CD4-positive, alpha-beta memory T cell (primary cell): ENCODE measurements at regions of chr6 and their contacts with region 1.

Region 1: GRCh38 chr6:144095331-144096002 is at the start of gene SF3B5:
- DNase-seq: peak; percentile 96 to 100 (median 98)
- H3K4me3 ChIP-seq: peak within 1 kb of the TSS; percentile 88 to 95
- H3K4me3 Mint-ChIP-seq: peak within 1 kb of the TSS; percentile 94 to 99 (median 98)
- H3K27ac ChIP-seq: peak within 1 kb of the TSS; percentile 91
- H3K27ac Mint-ChIP-seq: peak within 1 kb of the TSS; percentile 96 to 100 (median 99)
- H3K4me1 ChIP-seq: peaks cover 17% of the 10 kb centered on the region
- H3K4me1 Mint-ChIP-seq: peaks cover 15 to 35% (median 24%) of the 10 kb centered on the region in 4 donors
- H3K27me3 ChIP-seq: no peaks in the 10 kb centered on the region
- H3K27me3 Mint-ChIP-seq: no peaks in the 10 kb centered on the region
- total RNA-seq, gene SF3B5: 87.2 to 91.7 TPM

Region 2: GRCh38 chr6:143015300-143015706 is 1080.2 kb before region 1 on chr6:
- CTCF ChIA-PET with region 1: no interaction called
- POLR2A ChIA-PET with region 1: no interaction called
- intact Hi-C with region 1: no loop called
- DNase-seq: no peak
- H3K4me3 ChIP-seq: no peak overlapping the region
- H3K4me3 Mint-ChIP-seq: no peak overlapping the region
- H3K27ac ChIP-seq: no peak overlapping the region
- H3K27ac Mint-ChIP-seq: peak overlapping the region in 1 of 7 donors; percentile 62
- H3K4me1 ChIP-seq: no peaks in the 10 kb centered on the region
- H3K4me1 Mint-ChIP-seq: no peaks in the 10 kb centered on the region
- H3K27me3 ChIP-seq: no peaks in the 10 kb centered on the region
- H3K27me3 Mint-ChIP-seq: peaks cover 1 to 4% of the 10 kb centered on the region in 2 donors

Region 3: DNA sequence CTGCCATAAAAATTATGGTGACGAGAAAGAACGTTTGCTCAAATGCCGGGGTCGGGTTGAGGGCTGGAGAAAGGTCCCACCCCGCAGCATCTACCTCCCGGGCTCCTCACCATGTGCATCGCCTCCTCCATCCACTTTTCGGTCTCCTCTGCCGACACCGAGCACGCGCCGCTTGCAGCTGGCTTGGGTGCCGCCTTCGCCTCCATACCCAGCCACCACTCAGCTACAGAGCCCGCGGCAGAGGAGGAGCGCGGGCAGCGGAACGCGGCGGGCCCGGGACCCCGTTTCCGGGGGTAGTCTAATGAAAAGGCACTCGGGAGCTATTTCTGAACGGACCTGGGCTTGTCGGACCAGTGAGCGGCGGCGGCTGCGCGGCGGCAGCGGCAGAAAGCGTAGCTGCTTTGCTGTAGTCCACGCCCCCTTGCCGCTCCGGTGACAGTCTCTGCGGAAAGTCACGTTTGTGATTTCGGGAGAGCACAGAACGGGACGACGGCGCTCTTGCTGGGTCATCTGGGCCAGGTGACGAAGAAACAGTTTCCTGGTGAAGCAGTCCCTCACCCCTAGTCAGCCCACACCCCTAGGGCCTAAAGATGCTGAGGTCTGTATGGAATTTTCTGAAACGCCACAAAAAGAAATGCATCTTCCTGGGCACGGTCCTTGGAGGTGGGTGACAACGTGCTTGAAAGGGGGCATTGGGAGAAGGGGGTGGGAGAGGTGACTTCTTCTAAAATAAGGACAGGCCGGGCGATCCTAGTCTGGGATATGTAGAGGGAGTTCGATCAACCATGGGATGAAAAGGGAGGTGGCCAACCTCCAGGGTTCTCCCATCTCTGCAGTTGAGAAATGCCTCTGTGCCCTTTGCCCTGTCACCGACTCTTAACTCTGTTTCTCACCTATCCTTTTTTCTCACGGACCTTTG is 644.8 kb before region 1 on chr6 and contains the starts of genes ADAT2 and PEX3:
- CTCF ChIA-PET with region 1: no interaction called
- POLR2A ChIA-PET with region 1: interaction called, 4 read pairs
- intact Hi-C with region 1: loop called (anchors 1 kb)
- DNase-seq: peak; percentile 94 to 95 (median 94)
- H3K4me3 ChIP-seq: peak within 1 kb of the TSS; percentile 95 to 99
- H3K4me3 Mint-ChIP-seq: peak within 1 kb of the TSS; percentile 94 to 100 (median 98)
- H3K27ac ChIP-seq: peak within 1 kb of the TSS; percentile 67
- H3K27ac Mint-ChIP-seq: peak within 1 kb of the TSS; percentile 86 to 99 (median 97)
- H3K4me1 ChIP-seq: peaks cover 28% of the 10 kb centered on the region
- H3K4me1 Mint-ChIP-seq: peaks cover 25 to 49% (median 36%) of the 10 kb centered on the region in 4 donors
- H3K27me3 ChIP-seq: no peaks in the 10 kb centered on the region
- H3K27me3 Mint-ChIP-seq: no peaks in the 10 kb centered on the region
- total RNA-seq, gene ADAT2: 10.5 to 11.2 TPM
- total RNA-seq, gene PEX3: 20.8 to 23.5 TPM

Region 4: GRCh38 chr6:143842902-143843676 is 252.4 kb before region 1 on chr6 and contains the start of gene LTV1:
- CTCF ChIA-PET with region 1: no interaction called
- POLR2A ChIA-PET with region 1: interaction called, 8 read pairs
- intact Hi-C with region 1: loop called (anchors 10 kb)
- DNase-seq: peak; percentile 89 to 92 (median 90)
- H3K4me3 ChIP-seq: peak within 1 kb of the TSS; percentile 54 to 90
- H3K4me3 Mint-ChIP-seq: peak within 1 kb of the TSS; percentile 93 to 97 (median 95)
- H3K27ac ChIP-seq: peak within 1 kb of the TSS; percentile 92
- H3K27ac Mint-ChIP-seq: peak within 1 kb of the TSS; percentile 96 to 99 (median 98)
- H3K4me1 ChIP-seq: peaks cover 15% of the 10 kb centered on the region
- H3K4me1 Mint-ChIP-seq: peaks cover 19 to 32% (median 25%) of the 10 kb centered on the region in 4 donors
- H3K27me3 ChIP-seq: no peaks in the 10 kb centered on the region
- H3K27me3 Mint-ChIP-seq: no peaks in the 10 kb centered on the region
- total RNA-seq, gene LTV1: 19.9 to 20.8 TPM

Region 5: GRCh38 chr6:144055121-144055931 is 40.1 kb before region 1 on chr6:
- CTCF ChIA-PET with region 1: interaction called, 3 read pairs
- POLR2A ChIA-PET with region 1: interaction called, 41 read pairs
- intact Hi-C with region 1: loop called (anchors 2 kb)
- DNase-seq: peak; percentile 61 to 77 (median 72)
- H3K4me3 ChIP-seq: peak overlapping the region in 1 of 2 donors; percentile 46
- H3K4me3 Mint-ChIP-seq: peak overlapping the region; percentile 77 to 95 (median 89)
- H3K27ac ChIP-seq: peak overlapping the region; percentile 54
- H3K27ac Mint-ChIP-seq: peak overlapping the region; percentile 79 to 98 (median 96)
- H3K4me1 ChIP-seq: peaks cover 33% of the 10 kb centered on the region
- H3K4me1 Mint-ChIP-seq: peaks cover 28 to 39% (median 33%) of the 10 kb centered on the region in 4 donors
- H3K27me3 ChIP-seq: no peaks in the 10 kb centered on the region
- H3K27me3 Mint-ChIP-seq: no peaks in the 10 kb centered on the region

Region 6: GRCh38 chr6:144149891-144150709 is 54.6 kb after region 1 on chr6 and contains the start of gene STX11:
- CTCF ChIA-PET with region 1: no interaction called
- POLR2A ChIA-PET with region 1: interaction called, 14 read pairs
- intact Hi-C with region 1: loop called (anchors 1 kb)
- DNase-seq: peak; percentile 64 to 78 (median 68)
- H3K4me3 ChIP-seq: peak within 1 kb of the TSS; percentile 63 to 84
- H3K4me3 Mint-ChIP-seq: peak within 1 kb of the TSS; percentile 95 to 97 (median 96)
- H3K27ac ChIP-seq: peak within 1 kb of the TSS; percentile 80
- H3K27ac Mint-ChIP-seq: peak within 1 kb of the TSS; percentile 85 to 98 (median 96)
- H3K4me1 ChIP-seq: peaks cover 29% of the 10 kb centered on the region
- H3K4me1 Mint-ChIP-seq: peaks cover 24 to 29% (median 27%) of the 10 kb centered on the region in 4 donors
- H3K27me3 ChIP-seq: no peaks in the 10 kb centered on the region
- H3K27me3 Mint-ChIP-seq: no peaks in the 10 kb centered on the region
- total RNA-seq, gene STX11: 5.7 to 6.2 TPM

Region 7: DNA sequence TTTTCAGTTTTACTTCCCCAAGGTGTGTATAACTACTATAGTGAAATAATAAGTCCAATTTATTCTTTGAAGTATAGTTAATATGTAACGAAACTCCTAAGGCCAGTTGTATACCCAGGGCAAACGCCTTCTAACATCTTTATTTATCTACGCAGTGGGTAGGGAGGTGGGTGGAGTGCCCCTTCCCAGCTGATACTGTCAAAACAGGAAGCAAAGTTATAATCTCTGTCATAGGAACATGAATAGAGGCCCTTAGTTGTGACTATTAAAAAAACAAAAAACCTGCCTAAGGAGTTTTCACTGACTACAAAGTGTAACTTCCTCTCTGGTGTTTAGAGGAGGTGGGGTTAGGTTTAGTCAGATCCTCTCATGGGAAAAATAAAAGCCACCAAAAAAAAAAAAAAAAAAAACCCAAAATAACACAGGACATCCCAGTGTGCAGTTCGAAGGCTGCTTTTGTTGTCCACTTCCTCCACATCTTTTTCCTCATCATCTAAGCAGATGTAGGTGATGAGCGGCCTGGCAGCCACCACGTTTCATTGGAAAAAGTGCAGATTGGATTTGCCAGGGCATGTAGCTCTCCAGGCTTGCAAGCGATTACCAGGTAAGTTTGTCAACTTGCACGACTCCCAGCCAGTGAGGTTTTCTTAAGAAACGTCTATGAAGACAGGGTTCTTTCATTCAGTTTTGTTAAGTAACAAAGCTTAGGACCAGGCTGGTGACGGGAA is 248.4 kb after region 1 on chr6:
- CTCF ChIA-PET with region 1: interaction called, 3 read pairs
- POLR2A ChIA-PET with region 1: interaction called, 3 read pairs
- intact Hi-C with region 1: loop called (anchors 1 kb)
- DNase-seq: peak; percentile 74 to 85 (median 80)
- H3K4me3 ChIP-seq: peak overlapping the region; percentile 68 to 95
- H3K4me3 Mint-ChIP-seq: peak overlapping the region; percentile 87 to 98 (median 92)
- H3K27ac ChIP-seq: peak overlapping the region; percentile 75
- H3K27ac Mint-ChIP-seq: peak overlapping the region; percentile 93 to 99 (median 96)
- H3K4me1 ChIP-seq: peaks cover 65% of the 10 kb centered on the region
- H3K4me1 Mint-ChIP-seq: peaks cover 49 to 85% (median 69%) of the 10 kb centered on the region in 4 donors
- H3K27me3 ChIP-seq: no peaks in the 10 kb centered on the region
- H3K27me3 Mint-ChIP-seq: no peaks in the 10 kb centered on the region